T-cell (primary cell): ENCODE measurements at regions of chr15 and their contacts with region 1.

Region 1: GRCh38 chr15:33021806-33022389 is 172.6 kb downstream of the FMN1 start:
- DNase-seq: peak in 1 of 35 experiments; percentile 24
- ATAC-seq: no peak
- H3K4me3 ChIP-seq: no peak overlapping the region
- H3K4me3 Mint-ChIP-seq: no peak overlapping the region
- H3K27ac ChIP-seq: no peak overlapping the region
- H3K27ac Mint-ChIP-seq: no peak overlapping the region
- H3K4me1 ChIP-seq: no peaks in the 10 kb centered on the region
- H3K4me1 Mint-ChIP-seq: peaks cover 0 to 22% (median 7%) of the 10 kb centered on the region in 3 donors
- H3K27me3 ChIP-seq: no peaks in the 10 kb centered on the region
- H3K27me3 Mint-ChIP-seq: peaks cover 0 to 3% of the 10 kb centered on the region in 2 donors

Region 2: GRCh38 chr15:33825453-33825852 is 803.6 kb after region 1 on chr15:
- CTCF ChIA-PET with region 1: no interaction called
- POLR2A ChIA-PET with region 1: interaction called in 1 of 2 experiments, 28 read pairs
- DNase-seq: no peak
- ATAC-seq: no peak
- H3K4me3 ChIP-seq: no peak overlapping the region
- H3K4me3 Mint-ChIP-seq: no peak overlapping the region
- H3K27ac ChIP-seq: no peak overlapping the region
- H3K27ac Mint-ChIP-seq: no peak overlapping the region
- H3K4me1 ChIP-seq: no peaks in the 10 kb centered on the region
- H3K4me1 Mint-ChIP-seq: no peaks in the 10 kb centered on the region
- H3K27me3 ChIP-seq: peaks cover 0 to 4% of the 10 kb centered on the region in 2 experiments
- H3K27me3 Mint-ChIP-seq: peaks cover 16 to 17% of the 10 kb centered on the region in 2 donors